Motor neuron (in vitro differentiated cells): ENCODE measurements at regions of chr12 and their contacts with region 1.

Region 1: GRCh38 chr12:99043319-99043914 is 398.3 kb downstream of the APAF1 start:
- ATAC-seq: peak in 4 of 8 experiments; percentile 52 to 70 (median 62)
- H3K4me3 ChIP-seq: no peak overlapping the region
- H3K27ac ChIP-seq: no peak overlapping the region
- H3K4me1 ChIP-seq: no peaks in the 10 kb centered on the region

Region 2: GRCh38 chr12:98464190-98464589 is 579.2 kb before region 1 on chr12:
- in situ Hi-C with region 1: no loop called
- ATAC-seq: no peak
- H3K4me3 ChIP-seq: no peak overlapping the region
- H3K27ac ChIP-seq: no peak overlapping the region
- H3K4me1 ChIP-seq: no peaks in the 10 kb centered on the region

Region 3: DNA sequence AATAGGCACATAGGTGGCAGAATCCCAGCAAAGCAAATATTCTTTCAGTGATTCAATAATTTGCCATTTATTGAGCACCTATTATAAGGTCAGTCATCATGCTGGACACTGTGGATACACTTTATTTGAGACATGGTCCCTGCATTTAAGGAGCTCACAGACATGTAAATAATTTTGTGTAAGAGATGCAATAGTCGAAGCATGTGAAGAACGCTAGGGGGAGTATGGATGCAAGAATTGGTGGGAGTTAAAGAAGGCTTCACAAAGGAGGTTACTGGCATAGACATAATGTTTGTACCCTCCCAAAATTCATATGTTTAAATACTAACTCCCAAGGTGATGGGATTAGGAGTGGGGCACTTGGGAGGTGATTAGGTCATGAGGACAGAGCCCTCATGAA is 343.5 kb after region 1 on chr12:
- in situ Hi-C with region 1: loop called in 1 of 9 experiments (anchors 25 kb)
- ATAC-seq: peak in 3 of 8 experiments; percentile 30 to 64 (median 50)
- H3K4me3 ChIP-seq: no peak overlapping the region
- H3K27ac ChIP-seq: no peak overlapping the region
- H3K4me1 ChIP-seq: no peaks in the 10 kb centered on the region

Region 4: GRCh38 chr12:99619389-99620158 is 576.2 kb after region 1 on chr12:
- in situ Hi-C with region 1: loop called in 1 of 9 experiments (anchors 25 kb)
- ATAC-seq: peak in 4 of 8 experiments; percentile 31 to 76 (median 62)
- H3K4me3 ChIP-seq: no peak overlapping the region
- H3K27ac ChIP-seq: no peak overlapping the region
- H3K4me1 ChIP-seq: no peaks in the 10 kb centered on the region

Region 5: GRCh38 chr12:99658671-99659349 is 615.4 kb after region 1 on chr12:
- in situ Hi-C with region 1: loop called in 4 of 9 experiments (anchors 10 to 25 kb)
- ATAC-seq: peak in 2 of 8 experiments; percentile 30 to 51
- H3K4me3 ChIP-seq: no peak overlapping the region
- H3K27ac ChIP-seq: no peak overlapping the region
- H3K4me1 ChIP-seq: no peaks in the 10 kb centered on the region

Region 6: DNA sequence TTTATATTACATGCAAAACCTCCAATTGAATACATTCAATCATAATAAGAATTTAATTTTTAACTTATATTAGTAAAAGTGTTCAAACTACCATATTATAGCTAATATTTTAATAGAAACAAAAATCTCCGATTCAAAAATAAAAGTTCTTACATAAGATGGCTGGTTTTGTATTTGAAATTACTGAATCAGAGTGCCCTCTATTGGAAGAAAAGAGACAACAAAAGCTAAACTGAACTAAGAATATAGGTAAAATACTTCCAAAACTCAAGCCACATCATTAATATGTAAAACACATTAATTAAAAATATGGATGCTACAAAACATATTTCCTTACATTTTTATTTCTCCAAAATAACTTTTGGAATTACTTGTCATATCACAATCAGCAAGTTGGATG is 724.4 kb after region 1 on chr12:
- in situ Hi-C with region 1: loop called in 5 of 9 experiments (anchors 10 to 25 kb)
- ATAC-seq: no peak
- H3K4me3 ChIP-seq: no peak overlapping the region
- H3K27ac ChIP-seq: no peak overlapping the region
- H3K4me1 ChIP-seq: no peaks in the 10 kb centered on the region